Posterior vena cava (tissue), 2 donors: ENCODE measurements at regions of chr20 and their contacts with region 1.

Region 1: DNA sequence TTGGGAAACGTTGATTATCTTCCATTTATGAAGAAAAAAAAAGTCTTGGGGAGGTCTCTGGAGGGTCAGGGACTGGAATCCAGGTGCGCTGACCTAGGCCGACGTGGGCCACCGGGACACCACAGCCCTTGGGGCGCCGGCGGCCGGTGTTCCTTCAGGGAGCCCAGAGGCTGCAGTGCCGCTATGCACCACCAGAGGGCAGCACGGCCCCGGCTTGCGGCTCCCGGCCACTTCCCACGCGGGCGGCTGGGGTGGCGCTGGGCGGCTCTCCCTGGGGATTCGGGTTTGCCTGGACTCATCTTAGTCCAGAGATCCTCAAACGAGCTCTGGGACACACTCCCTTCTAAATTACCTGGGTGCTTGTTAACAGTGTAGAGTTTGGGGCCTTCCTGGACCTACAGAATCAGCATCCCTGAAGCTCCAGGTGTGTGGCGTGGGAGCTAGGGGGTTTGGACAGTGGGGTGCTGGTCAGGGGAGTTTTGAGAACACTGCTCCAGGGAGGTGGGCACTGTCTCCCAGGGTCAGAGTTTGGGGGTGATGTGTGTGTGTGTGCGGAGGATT is 23.0 kb upstream of the GTSF1L start:
- DNase-seq: peak; percentile 95

Region 2: DNA sequence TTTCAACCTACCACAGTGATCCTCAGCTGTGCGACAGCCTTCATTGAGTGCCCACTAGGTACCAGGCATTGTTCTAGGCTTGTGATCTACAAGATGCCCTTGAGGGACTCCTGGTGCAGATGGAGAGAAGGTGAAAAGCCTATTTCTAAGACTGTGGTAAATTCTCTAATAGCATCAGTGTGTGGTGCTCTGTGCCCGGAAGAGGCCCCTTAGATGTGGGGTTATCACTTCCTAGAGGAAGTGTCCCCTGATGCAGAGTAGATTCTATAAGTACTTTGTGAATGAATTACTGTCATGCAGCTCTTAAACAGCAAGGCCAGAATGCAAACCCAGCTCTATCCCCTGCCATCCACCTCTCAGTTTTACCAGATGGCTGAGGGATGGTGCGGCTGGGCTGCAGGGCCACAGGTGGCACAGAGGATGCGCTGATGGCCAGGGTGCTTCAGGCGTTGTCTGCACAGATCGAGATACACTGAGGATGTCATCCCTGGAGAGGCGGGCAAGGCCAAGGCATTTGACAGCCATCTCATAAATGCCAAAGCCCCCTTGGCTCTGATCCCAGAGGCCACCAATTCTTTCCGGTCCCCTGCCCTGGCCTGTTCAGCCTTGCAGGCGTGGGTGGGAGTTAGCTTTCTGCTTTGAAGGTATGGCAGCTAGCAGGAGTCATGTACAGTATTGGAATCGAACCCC is 261.6 kb after region 1 on chr20:
- intact Hi-C with region 1: no loop called
- DNase-seq: peak; percentile 48

Region 3: DNA sequence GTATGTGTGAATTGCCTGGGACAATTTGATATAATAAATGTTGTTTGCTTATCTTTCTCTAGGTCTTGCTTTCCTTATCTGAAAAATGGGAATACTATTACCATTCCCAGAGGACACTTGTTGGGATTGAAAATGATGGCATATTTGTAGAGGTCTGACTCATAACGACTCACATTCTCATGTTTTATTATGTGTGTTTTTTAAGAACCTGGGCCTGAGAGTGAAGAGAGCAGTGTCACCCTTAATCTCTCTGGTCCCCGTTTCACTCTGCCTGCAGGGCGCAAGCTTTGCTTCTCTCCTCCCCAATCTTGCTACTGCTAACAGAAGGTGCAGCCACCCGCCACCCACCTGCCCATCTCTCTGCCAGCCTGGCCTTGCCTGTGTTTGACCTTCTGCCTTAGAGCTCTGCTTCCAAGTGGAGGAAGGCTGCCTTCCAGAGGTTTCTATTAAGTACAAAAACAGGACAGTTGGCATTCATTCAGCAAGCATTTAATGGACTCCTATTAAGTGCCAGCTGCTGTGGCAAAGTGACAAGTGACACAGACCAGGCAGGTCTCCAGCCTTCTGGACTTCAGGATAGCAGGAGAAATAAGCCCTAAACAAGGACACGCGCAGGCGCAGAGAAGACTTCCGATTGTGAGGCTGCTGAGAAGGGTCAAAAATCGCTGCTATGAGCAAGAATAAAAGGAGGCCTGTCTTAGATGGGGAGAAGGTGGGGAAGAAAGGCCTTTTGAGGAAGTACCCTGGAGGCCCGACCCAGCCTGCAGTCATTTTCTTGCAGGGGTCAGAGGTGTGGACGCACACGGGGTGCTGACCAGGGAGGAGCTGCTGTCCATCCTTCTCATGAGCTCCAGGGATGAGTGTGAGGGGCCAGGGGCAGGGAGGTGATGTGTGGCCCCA is 324.7 kb after region 1 on chr20:
- intact Hi-C with region 1: loop called in 1 of 2 experiments (anchors 5 kb)
- DNase-seq: no peak